ENCODE measurements at regions of chr12 and their contacts with region 1.

Region 1: GRCh38 chr12:121550974-121551634 is 29.7 kb downstream of the KDM2B start:
- DNase-seq: no peak
- H3K4me3 ChIP-seq: no peak overlapping the region
- H3K27ac ChIP-seq: no peak overlapping the region
- H3K4me1 ChIP-seq: no peaks in the 10 kb centered on the region
- H3K27me3 ChIP-seq: no peaks in the 10 kb centered on the region
- CTCF ChIP-seq: no peak

Region 2: DNA sequence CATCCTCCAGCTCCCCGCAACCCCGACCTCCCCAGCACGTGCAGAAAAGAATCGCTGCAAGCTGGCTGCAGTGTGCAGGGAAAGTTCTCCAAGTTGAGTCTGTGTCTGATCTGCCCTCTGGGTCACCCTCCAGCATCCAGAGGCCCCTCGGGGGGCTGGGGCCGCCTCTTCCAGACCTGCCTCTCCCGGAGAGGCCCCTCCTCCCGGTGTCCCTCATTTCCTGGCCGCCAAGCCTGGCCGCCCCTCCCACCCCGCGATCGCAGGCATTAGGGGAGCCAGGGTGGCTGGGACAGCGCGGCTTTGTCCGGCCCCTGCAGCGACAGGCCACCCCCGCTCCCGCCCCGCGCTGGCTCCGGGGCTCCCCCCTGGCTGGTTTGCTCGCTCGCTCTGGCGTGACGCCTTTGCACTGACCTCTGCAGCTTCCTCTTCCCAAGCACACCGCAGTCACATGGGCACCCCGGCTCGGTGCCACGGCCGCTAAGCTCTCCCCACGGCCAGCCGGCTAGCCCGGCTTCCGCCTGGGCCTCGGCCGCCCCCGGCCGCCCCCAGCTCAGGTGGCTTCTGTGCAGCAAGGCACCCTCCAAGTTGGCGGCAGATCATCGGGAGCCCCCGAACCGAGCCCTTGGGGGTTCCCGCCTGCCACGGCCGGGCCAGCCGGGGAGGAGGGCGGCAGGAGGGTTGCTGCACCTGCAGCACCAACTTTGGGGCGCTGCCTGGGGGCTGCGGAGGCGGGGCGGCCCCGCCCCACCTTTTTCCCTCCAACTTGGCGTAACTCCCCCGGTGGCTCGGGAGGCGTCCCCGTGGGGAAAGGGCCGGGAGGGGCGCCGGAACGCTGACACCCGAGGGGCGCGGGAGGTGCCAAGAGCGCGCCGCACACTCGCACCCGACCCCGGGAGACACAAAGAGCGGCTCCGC is 13.9 kb before region 1 on chr12:
- CTCF ChIA-PET with region 1: interaction called, 10 read pairs
- POLR2A ChIA-PET with region 1: no interaction called
- intact Hi-C with region 1: no loop called
- DNase-seq: peak; percentile 45
- H3K4me3 ChIP-seq: peak overlapping the region; percentile 57
- H3K27ac ChIP-seq: peak overlapping the region; percentile 50
- H3K4me1 ChIP-seq: peaks cover 13% of the 10 kb centered on the region
- H3K27me3 ChIP-seq: no peaks in the 10 kb centered on the region
- CTCF ChIP-seq: no peak

Region 3: GRCh38 chr12:121626087-121626852 is 75.2 kb after region 1 on chr12 and contains the start of gene ORAI1:
- CTCF ChIA-PET with region 1: interaction called, 18 read pairs
- POLR2A ChIA-PET with region 1: no interaction called
- intact Hi-C with region 1: loop called (anchors 1 kb)
- DNase-seq: peak; percentile 96
- H3K4me3 ChIP-seq: peak within 1 kb of the TSS; percentile 91
- H3K27ac ChIP-seq: peak within 1 kb of the TSS; percentile 82
- H3K4me1 ChIP-seq: peaks cover 31% of the 10 kb centered on the region
- H3K27me3 ChIP-seq: no peaks in the 10 kb centered on the region
- CTCF ChIP-seq: no peak
- total RNA-seq, gene ORAI1: 25.6 and 28.2 TPM in 2 replicates

Region 4: DNA sequence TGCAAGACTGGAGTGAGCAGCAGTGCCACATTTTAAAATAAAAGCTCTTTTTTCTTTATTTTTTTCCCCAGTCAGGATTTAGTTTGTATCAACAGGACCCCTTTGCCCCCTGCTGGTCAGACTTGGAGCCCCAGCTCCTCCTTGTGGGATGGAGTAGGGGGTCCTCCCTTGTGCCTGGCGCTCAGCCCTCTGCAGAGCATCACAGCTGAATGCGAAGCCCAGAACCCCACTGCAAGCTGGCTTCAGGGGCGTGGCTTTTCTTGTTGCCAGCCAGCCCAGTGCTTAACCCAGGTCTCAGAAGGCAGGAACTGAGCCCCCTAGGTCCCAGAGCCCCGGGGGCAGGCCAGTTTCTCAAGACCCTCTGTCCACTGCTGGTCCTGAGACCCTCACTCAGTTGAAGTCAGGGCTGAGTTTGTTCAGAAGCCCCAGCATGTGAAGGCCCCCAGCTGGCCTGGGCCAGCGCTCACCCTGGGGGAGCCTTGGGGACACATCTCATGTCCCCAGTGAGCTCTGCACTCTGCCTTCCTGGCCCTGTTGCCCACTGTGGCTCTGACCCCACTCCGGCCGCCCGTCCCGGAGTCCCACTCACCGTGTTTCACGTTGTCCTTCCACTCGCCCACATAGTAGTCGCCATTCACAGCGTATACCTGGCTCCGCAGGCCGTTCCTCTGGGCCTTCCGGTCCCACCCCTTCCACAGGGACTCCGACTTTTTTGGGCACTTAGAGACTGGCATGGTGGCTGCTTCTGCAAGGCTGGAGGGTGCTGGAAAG is 117.8 kb after region 1 on chr12:
- CTCF ChIA-PET with region 1: interaction called, 52 read pairs
- POLR2A ChIA-PET with region 1: no interaction called
- intact Hi-C with region 1: loop called (anchors 5 kb)
- DNase-seq: peak; percentile 71
- H3K4me3 ChIP-seq: no peak overlapping the region
- H3K27ac ChIP-seq: no peak overlapping the region
- H3K4me1 ChIP-seq: no peaks in the 10 kb centered on the region
- H3K27me3 ChIP-seq: no peaks in the 10 kb centered on the region
- CTCF ChIP-seq: peak; percentile 64

Region 5: GRCh38 chr12:121678716-121679580 is 127.8 kb after region 1 on chr12:
- CTCF ChIA-PET with region 1: interaction called, 8 read pairs
- POLR2A ChIA-PET with region 1: no interaction called
- intact Hi-C with region 1: loop called (anchors 1 kb)
- DNase-seq: no peak
- H3K4me3 ChIP-seq: no peak overlapping the region
- H3K27ac ChIP-seq: peak overlapping the region; percentile 44
- H3K4me1 ChIP-seq: no peaks in the 10 kb centered on the region
- H3K27me3 ChIP-seq: no peaks in the 10 kb centered on the region
- CTCF ChIP-seq: no peak

Region 6: GRCh38 chr12:121688966-121689365 is 137.9 kb after region 1 on chr12:
- CTCF ChIA-PET with region 1: interaction called, 16 read pairs
- POLR2A ChIA-PET with region 1: no interaction called
- intact Hi-C with region 1: no loop called
- DNase-seq: no peak
- H3K4me3 ChIP-seq: no peak overlapping the region
- H3K27ac ChIP-seq: no peak overlapping the region
- H3K4me1 ChIP-seq: peaks cover 10% of the 10 kb centered on the region
- H3K27me3 ChIP-seq: no peaks in the 10 kb centered on the region
- CTCF ChIP-seq: no peak

Region 7: DNA sequence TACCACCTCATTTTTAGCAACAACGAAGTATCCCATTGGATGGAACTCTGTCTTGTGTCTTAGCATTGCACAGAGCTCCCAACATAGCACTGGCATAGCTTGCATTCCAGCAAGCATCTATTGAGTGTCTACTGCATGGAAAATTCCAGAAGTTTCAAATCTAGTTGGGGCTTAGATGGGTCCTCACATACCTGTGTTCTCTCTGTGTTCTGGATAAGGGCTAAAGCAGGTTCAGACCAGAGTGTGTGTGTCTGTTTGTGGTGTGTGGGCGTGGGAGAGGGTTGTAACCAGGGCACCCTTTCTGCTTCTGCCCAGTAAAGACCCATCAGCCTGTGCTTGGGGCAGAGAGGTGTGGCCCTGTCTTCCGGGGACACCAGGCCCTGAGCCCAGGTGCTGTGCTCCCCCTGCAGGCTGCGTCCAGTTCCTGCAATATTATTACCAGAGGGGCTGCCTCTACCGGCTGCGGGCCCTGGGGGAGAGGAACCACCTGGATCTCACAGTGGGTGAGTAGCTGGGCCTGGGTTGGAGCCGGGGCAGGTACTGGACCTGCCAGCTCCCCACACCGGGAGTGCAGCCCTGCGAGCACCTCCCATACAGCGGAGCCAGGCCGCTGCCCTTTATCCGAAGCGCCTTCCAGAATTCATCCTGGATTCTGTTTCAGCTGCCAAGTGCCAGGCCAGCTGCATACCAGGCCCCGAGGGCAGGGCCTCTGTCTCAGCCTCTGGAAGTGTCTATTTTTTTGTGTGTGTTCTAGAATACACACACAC is 222.1 kb after region 1 on chr12:
- CTCF ChIA-PET with region 1: no interaction called
- POLR2A ChIA-PET with region 1: no interaction called
- intact Hi-C with region 1: loop called (anchors 10 kb)
- DNase-seq: peak; percentile 70
- H3K4me3 ChIP-seq: no peak overlapping the region
- H3K27ac ChIP-seq: no peak overlapping the region
- H3K4me1 ChIP-seq: no peaks in the 10 kb centered on the region
- H3K27me3 ChIP-seq: no peaks in the 10 kb centered on the region
- CTCF ChIP-seq: peak; percentile 88

Region 8: GRCh38 chr12:122471324-122472226 is 920.5 kb after region 1 on chr12:
- CTCF ChIA-PET with region 1: no interaction called
- POLR2A ChIA-PET with region 1: no interaction called
- intact Hi-C with region 1: no loop called
- DNase-seq: peak; percentile 83
- H3K4me3 ChIP-seq: no peak overlapping the region
- H3K27ac ChIP-seq: peak overlapping the region; percentile 33
- H3K4me1 ChIP-seq: no peaks in the 10 kb centered on the region
- H3K27me3 ChIP-seq: no peaks in the 10 kb centered on the region
- CTCF ChIP-seq: peak; percentile 85